Left ventricle myocardium inferior (tissue), 1 donor: ENCODE measurements at regions of chr9 and their contacts with region 1.

Region 1: GRCh38 chr9:16559418-16560188 is 310.9 kb downstream of the BNC2 start:
- DNase-seq: no peak
- H3K4me3 ChIP-seq: no peak overlapping the region
- H3K27ac ChIP-seq: no peak overlapping the region
- H3K4me1 ChIP-seq: no peaks in the 10 kb centered on the region
- H3K27me3 ChIP-seq: peaks cover 2% of the 10 kb centered on the region
- CTCF ChIP-seq: no peak

Region 2: DNA sequence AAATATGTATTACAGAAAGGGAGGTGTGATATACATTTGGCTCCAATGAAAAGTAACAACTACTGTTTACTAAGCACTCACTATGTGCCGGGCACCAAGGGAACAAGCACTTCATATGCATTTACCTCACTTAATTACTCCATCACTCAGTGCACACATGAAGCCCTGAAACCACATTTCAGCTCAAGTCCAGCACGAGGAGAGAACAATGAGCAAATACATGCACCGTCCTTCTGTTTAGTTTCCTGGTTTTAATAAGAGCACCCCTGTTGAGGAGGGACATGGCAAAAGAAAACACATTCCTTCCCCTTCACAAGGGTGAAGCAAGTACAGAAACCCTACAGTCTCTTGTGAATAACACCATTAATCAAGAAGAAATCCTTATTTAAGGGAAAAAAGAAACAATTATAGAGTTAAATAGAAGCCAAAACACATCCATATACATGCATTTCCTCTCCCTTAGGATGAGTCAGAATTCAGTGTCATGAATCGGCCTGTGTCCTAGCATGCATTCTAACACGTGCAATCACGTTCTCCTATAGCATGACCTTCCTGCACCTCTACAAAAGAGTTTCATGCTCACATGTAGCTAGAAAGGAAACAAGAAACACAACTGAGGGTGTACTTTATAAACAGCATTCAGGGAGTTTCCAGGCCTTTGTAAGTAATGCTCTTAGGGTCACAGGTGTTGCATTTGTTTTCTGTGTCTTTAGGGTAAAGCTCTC is 100.7 kb before region 1 on chr9:
- intact Hi-C with region 1: no loop called
- DNase-seq: no peak
- H3K4me3 ChIP-seq: no peak overlapping the region
- H3K27ac ChIP-seq: no peak overlapping the region
- H3K4me1 ChIP-seq: no peaks in the 10 kb centered on the region
- H3K27me3 ChIP-seq: peaks cover 4% of the 10 kb centered on the region
- CTCF ChIP-seq: no peak

Region 3: GRCh38 chr9:16884952-16885513 is 325.4 kb after region 1 on chr9:
- intact Hi-C with region 1: no loop called
- DNase-seq: no peak
- H3K4me3 ChIP-seq: no peak overlapping the region
- H3K27ac ChIP-seq: no peak overlapping the region
- H3K4me1 ChIP-seq: no peaks in the 10 kb centered on the region
- H3K27me3 ChIP-seq: no peaks in the 10 kb centered on the region
- CTCF ChIP-seq: no peak

Region 4: GRCh38 chr9:17159469-17159868 is 599.9 kb after region 1 on chr9:
- intact Hi-C with region 1: loop called (anchors 10 kb)
- DNase-seq: no peak
- H3K4me3 ChIP-seq: no peak overlapping the region
- H3K27ac ChIP-seq: no peak overlapping the region
- H3K4me1 ChIP-seq: no peaks in the 10 kb centered on the region
- H3K27me3 ChIP-seq: no peaks in the 10 kb centered on the region
- CTCF ChIP-seq: no peak